Common myeloid progenitor, CD34-positive (primary cell): ENCODE measurements at regions of chr10 and their contacts with region 1.

Region 1: DNA sequence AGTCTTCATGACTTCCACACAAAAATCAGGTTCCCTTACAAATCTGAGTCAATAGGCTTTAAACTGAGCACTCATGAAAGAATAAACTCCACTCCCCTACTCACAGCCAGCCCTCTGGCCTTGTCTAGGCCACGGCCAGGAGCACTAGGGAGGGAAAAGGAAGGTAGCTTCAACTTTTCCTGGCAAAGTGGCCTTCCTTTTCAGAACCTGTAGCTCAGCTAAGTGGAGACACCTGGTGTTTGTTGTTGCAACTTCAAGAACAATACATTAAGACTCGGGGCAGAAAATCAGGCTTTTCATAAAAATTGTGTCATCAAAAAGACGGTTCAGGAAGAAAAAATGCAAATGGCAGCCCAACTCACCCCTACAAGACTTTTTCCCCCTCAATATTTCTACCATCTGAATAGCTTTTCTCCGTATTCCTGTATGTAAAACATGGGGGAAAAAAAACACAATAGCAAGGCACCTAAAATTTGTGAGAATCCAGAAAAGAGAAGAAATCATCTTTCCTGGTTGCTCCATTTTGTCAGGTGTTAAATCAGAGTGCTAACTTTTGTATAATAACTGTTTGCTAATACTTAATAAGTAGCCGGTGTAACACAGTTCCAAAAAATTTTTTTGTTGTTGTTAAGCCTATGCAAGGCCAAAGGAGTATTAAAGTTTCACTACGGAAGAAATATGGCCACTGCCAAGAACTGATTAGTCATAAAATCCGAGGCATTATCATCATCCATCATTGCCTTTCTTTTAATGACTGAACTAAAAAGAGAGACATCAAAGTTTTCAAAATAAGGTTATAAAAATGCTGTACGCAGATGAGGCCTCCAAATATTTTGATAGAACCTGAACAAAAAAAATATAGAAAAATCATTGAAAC is 66.2 kb upstream of the ARID5B start:
- DNase-seq: peak; percentile 53 to 65 (median 64)
- H3K4me3 ChIP-seq: no peak overlapping the region
- H3K27ac ChIP-seq: peak overlapping the region in 1 of 2 experiments; percentile 6
- H3K4me1 ChIP-seq: peaks cover 6 to 33% (median 20%) of the 10 kb centered on the region in 4 experiments
- H3K27me3 ChIP-seq: no peaks in the 10 kb centered on the region

Region 2: GRCh38 chr10:61815496-61815895 is 19.8 kb before region 1 on chr10:
- CTCF ChIA-PET with region 1: interaction called, 35 read pairs
- POLR2A ChIA-PET with region 1: no interaction called
- DNase-seq: peak in 2 of 3 donors; percentile 47 to 57
- H3K4me3 ChIP-seq: no peak overlapping the region
- H3K27ac ChIP-seq: no peak overlapping the region
- H3K4me1 ChIP-seq: peaks cover 0 to 30% (median 14%) of the 10 kb centered on the region in 4 experiments
- H3K27me3 ChIP-seq: no peaks in the 10 kb centered on the region